HepG2 (cell line): ENCODE measurements at regions of chr17 and their contacts with region 1.

Region 1: DNA sequence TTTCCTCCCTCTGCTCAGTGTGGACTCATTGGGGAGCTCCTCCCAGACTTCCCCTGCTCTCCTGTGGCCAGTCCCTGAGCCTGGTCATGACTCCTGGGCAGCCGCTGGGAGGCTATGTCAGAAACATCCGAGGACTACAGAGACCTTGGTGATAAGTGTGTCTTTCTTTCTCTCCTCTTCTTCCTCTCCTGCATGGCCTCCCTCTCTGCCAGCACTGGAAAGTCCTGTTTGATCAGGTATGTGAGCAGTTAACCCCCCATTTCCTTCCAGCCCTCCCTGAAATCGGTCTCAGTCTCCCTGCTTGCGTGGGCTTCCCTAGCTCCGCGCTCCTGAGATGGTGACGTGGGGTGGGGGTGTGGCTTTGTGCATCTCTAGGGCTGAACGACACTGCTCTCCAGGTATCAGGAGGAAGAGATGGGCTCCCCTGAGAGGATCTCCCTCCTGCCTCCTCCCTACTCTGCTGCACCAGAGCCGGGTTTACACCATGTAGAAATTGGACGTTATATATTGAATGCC is 2.1 kb downstream of the RHBDL3 start:
- DNase-seq: no peak
- ATAC-seq: peak; percentile 54
- H3K4me3 ChIP-seq: no peak overlapping the region
- H3K27ac ChIP-seq: no peak overlapping the region
- H3K4me1 ChIP-seq: peaks cover 23% of the 10 kb centered on the region
- H3K27me3 ChIP-seq: peaks cover 20 to 71% of the 10 kb centered on the region in 2 experiments
- CTCF ChIP-seq: no peak
- EP300 ChIP-seq: no peak
- POLR2A ChIP-seq: no peak
- RAD21 ChIP-seq: no peak

Region 2: DNA sequence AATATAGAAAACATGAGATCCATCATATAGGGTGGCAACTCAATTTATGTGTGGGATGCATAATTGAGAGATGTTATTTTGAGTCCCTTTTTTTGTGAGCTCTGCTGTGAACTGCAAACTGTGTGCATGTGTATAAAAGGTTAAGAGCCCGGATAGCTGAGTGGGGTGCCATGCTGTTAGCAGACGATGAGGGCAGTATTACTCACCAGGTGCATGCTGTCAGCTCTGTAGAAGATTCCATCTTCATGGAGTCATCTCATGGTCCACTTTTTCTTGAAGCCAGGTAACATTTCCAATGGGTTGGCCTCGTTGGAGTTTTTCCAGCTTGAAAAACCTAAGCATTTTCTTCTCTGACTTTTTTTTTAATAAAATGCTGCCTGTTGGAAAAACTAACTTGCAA is 45.1 kb before region 1 on chr17:
- CTCF ChIA-PET with region 1: no interaction called
- POLR2A ChIA-PET with region 1: no interaction called
- in situ Hi-C with region 1: no loop called
- intact Hi-C with region 1: loop called (anchors 1 kb)
- DNase-seq: no peak
- ATAC-seq: no peak
- H3K4me3 ChIP-seq: no peak overlapping the region
- H3K27ac ChIP-seq: no peak overlapping the region
- H3K4me1 ChIP-seq: no peaks in the 10 kb centered on the region
- H3K27me3 ChIP-seq: no peaks in the 10 kb centered on the region
- CTCF ChIP-seq: no peak
- EP300 ChIP-seq: no peak
- POLR2A ChIP-seq: no peak
- RAD21 ChIP-seq: no peak